GM12878 (cell line): ENCODE measurements at regions of chr12 and their contacts with region 1.

Region 1: GRCh38 chr12:12562585-12563261 is at the start of gene DUSP16:
- DNase-seq: peak; percentile 75
- ATAC-seq: peak; percentile 78
- H3K4me3 ChIP-seq: peak within 1 kb of the TSS; percentile 97
- H3K27ac ChIP-seq: peak within 1 kb of the TSS; percentile 100
- H3K4me1 ChIP-seq: peaks cover 13% of the 10 kb centered on the region
- H3K27me3 ChIP-seq: no peaks in the 10 kb centered on the region
- CTCF ChIP-seq: peak in 1 of 3 experiments; percentile 27; a peak in 1 of 6 replicates
- EP300 ChIP-seq: 0 out of 4 replicates have a peak, but pooled peaks of 1 of the 2 experiments have one; percentile 10
- POLR2A ChIP-seq: peak; percentile 80
- RAD21 ChIP-seq: 0 out of 2 replicates have a peak, but pooled peaks have one; percentile 18
- polyA plus RNA-seq, gene DUSP16: 3.9 to 5.0 TPM

Region 2: GRCh38 chr12:12247584-12247983 is 315.1 kb before region 1 on chr12:
- CTCF ChIA-PET with region 1: no interaction called
- POLR2A ChIA-PET with region 1: interaction called, 11 read pairs
- RAD21 ChIA-PET with region 1: no interaction called
- SMC1A ChIA-PET with region 1: no interaction called
- in situ Hi-C with region 1: no loop called
- intact Hi-C with region 1: no loop called
- DNase-seq: no peak
- ATAC-seq: no peak
- H3K4me3 ChIP-seq: no peak overlapping the region
- H3K27ac ChIP-seq: no peak overlapping the region
- H3K4me1 ChIP-seq: 0 out of 2 replicates have a peak, but pooled peaks cover 3% of the 10 kb centered on the region
- H3K27me3 ChIP-seq: no peaks in the 10 kb centered on the region
- CTCF ChIP-seq: no peak
- EP300 ChIP-seq: no peak
- POLR2A ChIP-seq: no peak
- RAD21 ChIP-seq: no peak

Region 3: DNA sequence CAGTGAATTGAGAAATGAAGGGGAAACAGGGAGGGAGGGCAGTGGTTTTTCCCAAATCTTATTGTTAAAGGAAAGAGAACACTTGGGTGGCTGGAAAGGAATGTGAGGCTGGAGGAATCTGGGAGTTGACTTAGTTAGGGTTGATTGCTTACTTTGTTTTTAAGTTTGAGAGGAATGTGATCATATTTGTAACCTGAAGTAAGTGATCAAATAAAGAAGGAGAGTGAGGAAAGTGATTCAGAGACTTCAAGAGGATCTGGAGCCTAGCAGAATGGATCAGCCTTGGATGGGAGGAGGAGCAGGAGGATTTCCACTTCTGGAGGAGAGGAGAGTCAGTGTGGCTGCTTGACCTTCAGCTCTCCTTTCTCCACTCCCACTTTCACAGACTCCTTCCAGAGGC is 289.9 kb before region 1 on chr12:
- CTCF ChIA-PET with region 1: no interaction called
- POLR2A ChIA-PET with region 1: no interaction called
- RAD21 ChIA-PET with region 1: no interaction called
- SMC1A ChIA-PET with region 1: no interaction called
- in situ Hi-C with region 1: no loop called
- intact Hi-C with region 1: no loop called
- DNase-seq: no peak
- ATAC-seq: no peak
- H3K4me3 ChIP-seq: no peak overlapping the region
- H3K27ac ChIP-seq: no peak overlapping the region
- H3K4me1 ChIP-seq: no peaks in the 10 kb centered on the region
- H3K27me3 ChIP-seq: no peaks in the 10 kb centered on the region
- CTCF ChIP-seq: no peak
- EP300 ChIP-seq: no peak
- POLR2A ChIP-seq: no peak
- RAD21 ChIP-seq: no peak

Region 4: GRCh38 chr12:12474931-12475795 is 87.6 kb before region 1 on chr12:
- CTCF ChIA-PET with region 1: interaction called, 4 read pairs
- POLR2A ChIA-PET with region 1: interaction called, 5 read pairs
- RAD21 ChIA-PET with region 1: interaction called, 7 read pairs
- SMC1A ChIA-PET with region 1: interaction called, 14 read pairs
- in situ Hi-C with region 1: no loop called
- intact Hi-C with region 1: loop called (anchors 2 kb)
- DNase-seq: peak; percentile 87
- ATAC-seq: peak; percentile 98
- H3K4me3 ChIP-seq: 0 out of 2 replicates have a peak overlapping the region, but pooled peaks have one; percentile 30
- H3K27ac ChIP-seq: peak overlapping the region; percentile 94
- H3K4me1 ChIP-seq: peaks cover 24% of the 10 kb centered on the region
- H3K27me3 ChIP-seq: no peaks in the 10 kb centered on the region
- CTCF ChIP-seq: peak in 1 of 3 experiments; percentile 19; a peak in 1 of 6 replicates
- EP300 ChIP-seq: peak; percentile 82 to 88; a peak in 3 of 4 replicates
- POLR2A ChIP-seq: no peak
- RAD21 ChIP-seq: peak; percentile 61

Region 5: GRCh38 chr12:12540261-12541013 is 22.3 kb before region 1 on chr12:
- CTCF ChIA-PET with region 1: no interaction called
- POLR2A ChIA-PET with region 1: interaction called, 3 read pairs
- RAD21 ChIA-PET with region 1: interaction called, 5 read pairs
- SMC1A ChIA-PET with region 1: interaction called, 22 read pairs
- in situ Hi-C with region 1: no loop called
- intact Hi-C with region 1: no loop called
- DNase-seq: no peak
- ATAC-seq: peak; percentile 50
- H3K4me3 ChIP-seq: no peak overlapping the region
- H3K27ac ChIP-seq: peak overlapping the region; percentile 30
- H3K4me1 ChIP-seq: peaks cover 15% of the 10 kb centered on the region
- H3K27me3 ChIP-seq: no peaks in the 10 kb centered on the region
- CTCF ChIP-seq: no peak
- EP300 ChIP-seq: no peak
- POLR2A ChIP-seq: no peak
- RAD21 ChIP-seq: no peak

Region 6: DNA sequence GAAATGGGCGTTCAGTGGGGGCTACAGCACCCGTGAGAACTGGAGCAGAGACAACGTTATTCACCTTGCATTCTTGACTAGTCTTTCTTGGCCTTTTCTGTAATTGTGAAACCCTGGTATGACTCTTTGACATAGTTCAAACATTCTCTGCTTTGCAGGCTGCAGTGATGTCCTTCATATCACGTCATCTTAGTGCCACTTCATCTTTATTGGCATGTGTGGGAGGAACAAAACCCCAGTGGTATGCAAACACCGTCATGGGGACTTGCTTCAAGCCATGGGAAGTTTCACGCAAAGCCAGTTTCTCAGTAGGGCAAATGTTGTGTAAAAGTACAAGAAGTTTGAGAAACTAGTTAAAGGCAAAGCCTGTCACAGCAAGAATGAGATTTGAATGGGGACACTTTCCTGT is 20.2 kb after region 1 on chr12:
- CTCF ChIA-PET with region 1: interaction called, 27 read pairs
- POLR2A ChIA-PET with region 1: interaction called, 18 read pairs
- RAD21 ChIA-PET with region 1: interaction called, 23 read pairs
- SMC1A ChIA-PET with region 1: interaction called, 19 read pairs
- in situ Hi-C with region 1: no loop called
- intact Hi-C with region 1: loop called (anchors 1 kb)
- DNase-seq: peak; percentile 100
- ATAC-seq: peak; percentile 92
- H3K4me3 ChIP-seq: no peak overlapping the region
- H3K27ac ChIP-seq: peak overlapping the region; percentile 94
- H3K4me1 ChIP-seq: peaks cover 44% of the 10 kb centered on the region
- H3K27me3 ChIP-seq: no peaks in the 10 kb centered on the region
- CTCF ChIP-seq: no peak
- EP300 ChIP-seq: peak; percentile 96 to 99
- POLR2A ChIP-seq: peak; percentile 36; the same call in 1 of the 2 replicates
- RAD21 ChIP-seq: 0 out of 2 replicates have a peak, but pooled peaks have one; percentile 17

Region 7: GRCh38 chr12:12696562-12697383 is 134.1 kb after region 1 on chr12:
- CTCF ChIA-PET with region 1: interaction called, 10 read pairs
- POLR2A ChIA-PET with region 1: interaction called, 4 read pairs
- RAD21 ChIA-PET with region 1: interaction called, 3 read pairs
- SMC1A ChIA-PET with region 1: interaction called, 4 read pairs
- in situ Hi-C with region 1: no loop called
- intact Hi-C with region 1: loop called (anchors 5 kb)
- DNase-seq: peak; percentile 91
- ATAC-seq: peak; percentile 78
- H3K4me3 ChIP-seq: peak overlapping the region; percentile 77
- H3K27ac ChIP-seq: peak overlapping the region; percentile 99
- H3K4me1 ChIP-seq: peaks cover 35% of the 10 kb centered on the region
- H3K27me3 ChIP-seq: no peaks in the 10 kb centered on the region
- CTCF ChIP-seq: no peak
- EP300 ChIP-seq: peak; percentile 39 to 63; a peak in 2 of 4 replicates
- POLR2A ChIP-seq: peak; percentile 72
- RAD21 ChIP-seq: no peak

Region 8: GRCh38 chr12:12724661-12725545 is 162.2 kb after region 1 on chr12:
- CTCF ChIA-PET with region 1: interaction called, 5 read pairs
- POLR2A ChIA-PET with region 1: interaction called, 5 read pairs
- RAD21 ChIA-PET with region 1: interaction called, 3 read pairs
- SMC1A ChIA-PET with region 1: interaction called, 14 read pairs
- in situ Hi-C with region 1: no loop called
- intact Hi-C with region 1: no loop called
- DNase-seq: peak; percentile 94
- ATAC-seq: peak; percentile 55
- H3K4me3 ChIP-seq: peak overlapping the region; percentile 97
- H3K27ac ChIP-seq: peak overlapping the region; percentile 97
- H3K4me1 ChIP-seq: peaks cover 14% of the 10 kb centered on the region
- H3K27me3 ChIP-seq: no peaks in the 10 kb centered on the region
- CTCF ChIP-seq: no peak
- EP300 ChIP-seq: no peak
- POLR2A ChIP-seq: peak; percentile 76
- RAD21 ChIP-seq: no peak